Right cardiac atrium (tissue), 5 donors: ENCODE measurements at regions of chr13 and their contacts with region 1.

Region 1: DNA sequence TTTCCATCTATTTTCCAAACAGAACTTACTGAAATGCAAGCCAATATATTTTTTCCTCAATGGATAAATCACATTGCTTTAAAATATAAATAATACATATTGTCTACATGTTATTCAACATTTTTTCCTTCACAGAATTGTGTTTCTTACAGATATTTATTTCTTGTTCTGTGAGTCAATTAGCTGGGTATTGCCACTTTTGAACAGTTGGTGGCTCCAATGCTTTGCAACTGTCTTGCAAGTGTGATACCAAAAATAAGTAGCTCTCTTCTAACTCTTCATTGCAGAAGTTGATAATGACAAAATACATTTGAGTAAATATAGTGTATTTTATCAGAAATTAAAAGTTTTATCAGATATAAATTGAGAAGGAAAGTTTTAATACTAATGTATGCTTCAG is 17.1 kb upstream of the GPC5 start:
- DNase-seq: no peak
- ATAC-seq: no peak
- H3K4me3 ChIP-seq: no peak overlapping the region
- H3K27ac ChIP-seq: no peak overlapping the region
- H3K4me1 ChIP-seq: no peaks in the 10 kb centered on the region
- H3K27me3 ChIP-seq: no peaks in the 10 kb centered on the region

Region 2: DNA sequence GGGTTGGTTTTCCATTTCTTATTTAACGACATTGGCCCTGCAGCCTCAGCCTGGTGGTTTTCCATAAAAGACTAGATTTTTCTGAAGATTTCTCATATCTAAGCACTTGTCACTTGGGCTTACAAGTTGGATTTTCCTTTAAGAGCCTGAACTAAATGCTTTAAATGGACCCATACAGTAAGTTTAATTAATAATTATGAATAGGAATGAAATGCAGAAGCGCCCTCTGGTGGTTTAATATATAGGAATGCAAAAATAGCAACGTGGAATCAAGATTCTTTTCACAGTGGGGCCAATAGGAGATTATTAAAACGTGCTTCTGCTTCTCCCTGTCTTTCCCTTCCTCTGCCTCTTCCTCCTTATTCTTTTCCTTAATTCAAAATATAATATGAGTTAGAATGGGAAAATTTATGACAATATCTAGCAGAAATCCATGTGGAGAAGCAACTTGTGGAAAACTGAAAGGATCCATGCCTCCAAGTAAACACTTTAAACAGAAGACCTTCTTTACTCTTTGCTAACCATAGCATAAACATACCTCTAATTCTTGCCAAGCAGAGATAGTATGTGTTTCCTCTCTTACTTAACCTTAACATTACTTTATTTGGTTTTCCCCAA is 341.0 kb after region 1 on chr13:
- intact Hi-C with region 1: loop called (anchors 2 to 10 kb)
- DNase-seq: no peak
- ATAC-seq: no peak
- H3K4me3 ChIP-seq: no peak overlapping the region
- H3K27ac ChIP-seq: no peak overlapping the region
- H3K4me1 ChIP-seq: no peaks in the 10 kb centered on the region
- H3K27me3 ChIP-seq: no peaks in the 10 kb centered on the region

Region 3: GRCh38 chr13:91785431-91786119 is 404.2 kb after region 1 on chr13:
- intact Hi-C with region 1: loop called in 1 of 4 experiments (anchors 10 kb)
- DNase-seq: peak in 1 of 3 donors; percentile 10
- ATAC-seq: no peak
- H3K4me3 ChIP-seq: no peak overlapping the region
- H3K27ac ChIP-seq: no peak overlapping the region
- H3K4me1 ChIP-seq: no peaks in the 10 kb centered on the region
- H3K27me3 ChIP-seq: no peaks in the 10 kb centered on the region